GM12878 (cell line): ENCODE measurements at regions of chr2 and their contacts with region 1.

Region 1: GRCh38 chr2:174465327-174465726 is 21.5 kb downstream of the GPR155 start:
- DNase-seq: no peak
- ATAC-seq: no peak
- H3K4me3 ChIP-seq: no peak overlapping the region
- H3K27ac ChIP-seq: no peak overlapping the region
- H3K4me1 ChIP-seq: no peaks in the 10 kb centered on the region
- H3K27me3 ChIP-seq: no peaks in the 10 kb centered on the region
- CTCF ChIP-seq: no peak
- EP300 ChIP-seq: no peak
- POLR2A ChIP-seq: no peak
- RAD21 ChIP-seq: no peak

Region 2: DNA sequence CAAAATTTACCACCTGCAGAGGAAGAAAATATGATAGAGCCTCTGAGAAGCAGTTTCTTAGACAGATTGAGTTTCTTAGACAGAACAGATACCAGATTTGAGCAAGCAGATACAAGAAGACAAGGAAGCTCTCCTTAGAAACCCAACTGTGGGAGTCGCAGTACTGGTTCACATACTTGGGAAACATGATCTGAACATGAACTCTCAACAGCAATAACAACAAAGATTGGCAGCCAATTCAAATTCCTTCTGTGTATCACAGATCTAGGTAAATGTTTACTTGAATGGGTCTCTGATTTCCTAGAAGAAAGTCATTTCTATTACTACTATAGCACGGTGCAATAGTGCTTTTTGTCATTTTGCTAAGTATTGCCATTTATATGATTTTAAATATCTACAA is 299.0 kb before region 1 on chr2:
- CTCF ChIA-PET with region 1: no interaction called
- POLR2A ChIA-PET with region 1: no interaction called
- RAD21 ChIA-PET with region 1: no interaction called
- SMC1A ChIA-PET with region 1: no interaction called
- in situ Hi-C with region 1: no loop called
- intact Hi-C with region 1: no loop called
- DNase-seq: no peak
- ATAC-seq: no peak
- H3K4me3 ChIP-seq: no peak overlapping the region
- H3K27ac ChIP-seq: no peak overlapping the region
- H3K4me1 ChIP-seq: no peaks in the 10 kb centered on the region
- H3K27me3 ChIP-seq: no peaks in the 10 kb centered on the region
- CTCF ChIP-seq: no peak
- EP300 ChIP-seq: no peak
- POLR2A ChIP-seq: no peak
- RAD21 ChIP-seq: no peak

Region 3: DNA sequence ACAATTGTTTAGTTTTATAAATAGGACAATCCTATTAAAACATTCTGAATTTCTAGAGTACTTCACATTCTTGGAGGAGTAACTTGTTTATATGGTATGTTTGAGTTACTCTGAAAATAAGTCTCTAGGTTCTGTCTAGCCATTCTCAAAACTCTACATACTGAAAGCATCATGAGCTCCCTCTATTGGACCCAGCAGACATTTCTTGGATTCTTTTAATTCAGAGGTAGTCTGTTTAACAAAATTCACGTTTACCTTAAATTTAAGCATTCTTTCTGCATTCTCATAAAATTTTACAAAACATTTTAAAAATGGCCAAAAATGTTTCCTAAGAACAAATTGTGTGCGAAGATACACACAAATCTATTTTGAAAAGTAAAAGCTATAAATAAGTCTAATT is 115.3 kb before region 1 on chr2:
- CTCF ChIA-PET with region 1: no interaction called
- POLR2A ChIA-PET with region 1: no interaction called
- RAD21 ChIA-PET with region 1: no interaction called
- SMC1A ChIA-PET with region 1: no interaction called
- in situ Hi-C with region 1: no loop called
- intact Hi-C with region 1: no loop called
- DNase-seq: no peak
- ATAC-seq: peak; percentile 36; the same call in 1 of the 3 replicates
- H3K4me3 ChIP-seq: no peak overlapping the region
- H3K27ac ChIP-seq: no peak overlapping the region
- H3K4me1 ChIP-seq: no peaks in the 10 kb centered on the region
- H3K27me3 ChIP-seq: no peaks in the 10 kb centered on the region
- CTCF ChIP-seq: peak; percentile 20 to 31 (median 26); a peak in 3 of 6 replicates
- EP300 ChIP-seq: no peak
- POLR2A ChIP-seq: no peak
- RAD21 ChIP-seq: peak; percentile 17; the same call in 1 of the 2 replicates

Region 4: DNA sequence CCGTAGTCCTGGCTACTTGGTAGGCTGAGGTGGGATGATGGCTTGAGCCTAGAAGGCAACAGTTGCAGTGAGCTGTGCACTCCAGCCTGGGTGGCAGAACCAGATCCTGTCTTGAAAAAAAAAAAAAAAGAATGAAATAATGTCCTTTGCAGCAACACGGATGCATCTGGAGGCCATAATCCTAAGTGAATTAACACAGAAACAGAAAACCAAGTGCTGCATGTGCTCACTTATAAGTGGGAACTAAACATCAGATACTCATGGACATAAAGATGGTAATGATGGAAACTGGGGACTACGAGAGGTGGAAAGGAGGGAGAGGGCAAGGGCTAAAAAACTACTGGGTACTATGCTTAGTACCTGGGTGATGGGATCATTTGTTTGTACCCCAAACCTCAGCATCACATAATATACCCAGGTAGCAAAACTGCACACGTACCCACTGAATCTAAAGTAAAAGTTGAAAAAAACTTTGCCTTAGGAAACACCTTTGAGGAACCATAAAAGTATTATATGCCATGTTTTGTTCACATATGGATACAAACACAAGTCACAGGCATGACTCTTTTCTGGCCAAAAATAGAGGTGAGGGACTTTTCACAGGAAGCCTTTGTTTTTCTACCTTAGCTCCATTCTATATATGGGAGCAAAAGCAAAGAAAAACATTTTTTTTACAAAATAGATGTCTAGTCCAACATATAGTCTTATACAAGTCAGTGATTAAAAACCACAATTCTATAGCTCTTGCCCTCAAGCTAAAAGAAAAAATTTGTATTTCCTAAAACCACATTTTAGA is 15.1 kb before region 1 on chr2:
- CTCF ChIA-PET with region 1: interaction called, 13 read pairs
- POLR2A ChIA-PET with region 1: no interaction called
- RAD21 ChIA-PET with region 1: interaction called, 5 read pairs
- SMC1A ChIA-PET with region 1: interaction called, 7 read pairs
- in situ Hi-C with region 1: no loop called
- intact Hi-C with region 1: no loop called
- DNase-seq: peak; percentile 16
- ATAC-seq: peak; percentile 61
- H3K4me3 ChIP-seq: no peak overlapping the region
- H3K27ac ChIP-seq: peak overlapping the region; percentile 64
- H3K4me1 ChIP-seq: peaks cover 9% of the 10 kb centered on the region; the same call in 1 of the 2 replicates
- H3K27me3 ChIP-seq: no peaks in the 10 kb centered on the region
- CTCF ChIP-seq: no peak
- EP300 ChIP-seq: no peak
- POLR2A ChIP-seq: no peak
- RAD21 ChIP-seq: no peak

Region 5: DNA sequence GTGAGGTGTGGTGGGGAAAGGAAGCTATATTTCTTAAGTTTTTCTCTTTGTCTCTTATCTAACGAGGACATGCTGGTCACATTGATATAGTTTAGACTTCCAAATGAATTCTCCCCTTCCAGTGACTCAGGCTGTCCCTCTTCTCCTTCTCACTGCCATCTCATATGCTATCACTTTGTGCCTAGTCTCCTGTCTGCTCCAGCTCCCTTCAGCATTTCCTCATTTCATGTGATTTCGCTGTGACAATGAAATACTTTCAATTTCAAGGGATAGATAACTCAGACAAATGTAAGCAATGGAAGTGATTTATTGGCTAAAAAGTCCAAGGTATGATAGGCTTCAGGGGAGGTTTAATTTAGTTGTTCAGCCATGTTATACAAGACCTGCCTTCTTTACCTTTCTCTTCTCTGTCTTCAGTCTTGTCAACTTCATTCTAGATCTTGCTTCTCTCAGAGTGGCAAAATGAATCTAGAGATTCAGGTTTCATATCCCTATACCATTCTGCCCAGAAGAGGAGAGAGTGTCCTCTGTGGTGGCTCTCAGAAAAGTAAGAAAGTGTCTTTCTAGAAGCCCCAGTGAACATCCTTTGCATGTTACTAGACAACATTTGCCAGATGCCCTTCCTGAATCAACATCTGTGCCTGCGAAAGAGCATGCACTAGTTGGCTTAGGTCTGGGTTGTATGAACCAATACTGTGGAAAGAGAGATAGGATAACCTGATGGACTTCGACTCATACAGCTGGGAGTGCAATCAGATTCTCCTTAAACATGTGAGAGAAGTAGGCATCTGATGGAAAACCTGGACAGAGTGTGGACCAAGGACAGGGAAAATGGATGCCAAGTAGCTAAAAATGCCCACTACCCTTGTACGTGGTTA is 51.4 kb after region 1 on chr2:
- CTCF ChIA-PET with region 1: interaction called, 95 read pairs
- POLR2A ChIA-PET with region 1: interaction called, 3 read pairs
- RAD21 ChIA-PET with region 1: interaction called, 42 read pairs
- SMC1A ChIA-PET with region 1: interaction called, 55 read pairs
- in situ Hi-C with region 1: loop called (anchors 5 kb)
- intact Hi-C with region 1: no loop called
- DNase-seq: no peak
- ATAC-seq: peak; percentile 62
- H3K4me3 ChIP-seq: no peak overlapping the region
- H3K27ac ChIP-seq: no peak overlapping the region
- H3K4me1 ChIP-seq: peaks cover 9% of the 10 kb centered on the region
- H3K27me3 ChIP-seq: peaks cover 0 to 2% of the 10 kb centered on the region in 2 experiments; a peak in 1 of 4 replicates
- CTCF ChIP-seq: no peak
- EP300 ChIP-seq: no peak
- POLR2A ChIP-seq: no peak
- RAD21 ChIP-seq: no peak

Region 6: GRCh38 chr2:174546581-174547506 is 81.5 kb after region 1 on chr2:
- CTCF ChIA-PET with region 1: interaction called, 119 read pairs
- POLR2A ChIA-PET with region 1: interaction called, 3 read pairs
- RAD21 ChIA-PET with region 1: interaction called, 81 read pairs
- SMC1A ChIA-PET with region 1: interaction called, 116 read pairs
- in situ Hi-C with region 1: no loop called
- intact Hi-C with region 1: loop called (anchors 1 kb)
- DNase-seq: no peak
- ATAC-seq: peak; percentile 85
- H3K4me3 ChIP-seq: no peak overlapping the region
- H3K27ac ChIP-seq: no peak overlapping the region
- H3K4me1 ChIP-seq: no peaks in the 10 kb centered on the region
- H3K27me3 ChIP-seq: no peaks in the 10 kb centered on the region
- CTCF ChIP-seq: peak; percentile 52 to 71 (median 55); a peak in 5 of 6 replicates
- EP300 ChIP-seq: no peak
- POLR2A ChIP-seq: no peak
- RAD21 ChIP-seq: peak; percentile 84

Region 7: DNA sequence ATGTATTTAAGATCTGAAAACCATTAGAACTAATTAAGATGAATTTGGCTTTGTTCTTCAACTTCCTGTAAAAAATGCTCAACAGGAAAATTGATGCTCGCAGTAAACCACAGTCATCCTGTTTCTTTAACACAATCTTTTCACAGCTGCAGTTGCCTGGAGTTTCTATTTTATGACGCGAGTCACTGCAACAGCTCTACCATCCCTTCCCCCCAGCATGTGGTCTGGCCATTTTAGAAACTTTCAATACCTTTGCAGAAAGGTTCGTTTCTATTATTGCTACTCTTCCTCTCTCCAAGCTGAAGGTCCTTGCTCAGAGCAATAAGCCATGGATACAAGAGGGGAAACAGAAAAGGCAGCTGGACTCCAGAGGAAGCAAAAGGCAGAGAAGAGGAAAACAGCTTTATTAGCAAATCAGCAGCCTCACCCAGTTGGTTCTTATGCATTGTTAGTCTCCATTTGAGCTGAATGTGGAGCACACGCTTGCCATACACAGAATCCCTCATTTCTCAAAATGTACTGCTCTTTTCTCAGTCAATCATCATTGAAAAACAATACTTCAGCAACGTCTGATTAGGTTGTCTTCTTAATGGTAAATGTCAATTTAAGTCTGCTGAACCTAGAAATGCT is 128.4 kb after region 1 on chr2:
- CTCF ChIA-PET with region 1: interaction called, 9 read pairs
- POLR2A ChIA-PET with region 1: no interaction called
- RAD21 ChIA-PET with region 1: interaction called, 10 read pairs
- SMC1A ChIA-PET with region 1: interaction called, 8 read pairs
- in situ Hi-C with region 1: no loop called
- intact Hi-C with region 1: no loop called
- DNase-seq: peak; percentile 90
- ATAC-seq: peak; percentile 65
- H3K4me3 ChIP-seq: peak overlapping the region; percentile 58
- H3K27ac ChIP-seq: peak overlapping the region; percentile 95
- H3K4me1 ChIP-seq: peaks cover 20% of the 10 kb centered on the region
- H3K27me3 ChIP-seq: no peaks in the 10 kb centered on the region
- CTCF ChIP-seq: no peak
- EP300 ChIP-seq: peak; percentile 88 to 96
- POLR2A ChIP-seq: peak; percentile 53
- RAD21 ChIP-seq: no peak

Region 8: GRCh38 chr2:174682578-174683391 is 217.5 kb after region 1 on chr2:
- CTCF ChIA-PET with region 1: interaction called, 165 read pairs
- POLR2A ChIA-PET with region 1: no interaction called
- RAD21 ChIA-PET with region 1: interaction called, 40 read pairs
- SMC1A ChIA-PET with region 1: interaction called, 92 read pairs
- in situ Hi-C with region 1: no loop called
- intact Hi-C with region 1: no loop called
- DNase-seq: no peak
- ATAC-seq: peak; percentile 66
- H3K4me3 ChIP-seq: peak overlapping the region; percentile 79
- H3K27ac ChIP-seq: no peak overlapping the region
- H3K4me1 ChIP-seq: peaks cover 4% of the 10 kb centered on the region; the same call in 1 of the 2 replicates
- H3K27me3 ChIP-seq: peaks cover 0 to 2% of the 10 kb centered on the region in 2 experiments; a peak in 2 of 4 replicates
- CTCF ChIP-seq: no peak
- EP300 ChIP-seq: no peak
- POLR2A ChIP-seq: no peak
- RAD21 ChIP-seq: no peak